Tibial artery (tissue), 4 donors: ENCODE measurements at regions of chr7 and their contacts with region 1.

Region 1: DNA sequence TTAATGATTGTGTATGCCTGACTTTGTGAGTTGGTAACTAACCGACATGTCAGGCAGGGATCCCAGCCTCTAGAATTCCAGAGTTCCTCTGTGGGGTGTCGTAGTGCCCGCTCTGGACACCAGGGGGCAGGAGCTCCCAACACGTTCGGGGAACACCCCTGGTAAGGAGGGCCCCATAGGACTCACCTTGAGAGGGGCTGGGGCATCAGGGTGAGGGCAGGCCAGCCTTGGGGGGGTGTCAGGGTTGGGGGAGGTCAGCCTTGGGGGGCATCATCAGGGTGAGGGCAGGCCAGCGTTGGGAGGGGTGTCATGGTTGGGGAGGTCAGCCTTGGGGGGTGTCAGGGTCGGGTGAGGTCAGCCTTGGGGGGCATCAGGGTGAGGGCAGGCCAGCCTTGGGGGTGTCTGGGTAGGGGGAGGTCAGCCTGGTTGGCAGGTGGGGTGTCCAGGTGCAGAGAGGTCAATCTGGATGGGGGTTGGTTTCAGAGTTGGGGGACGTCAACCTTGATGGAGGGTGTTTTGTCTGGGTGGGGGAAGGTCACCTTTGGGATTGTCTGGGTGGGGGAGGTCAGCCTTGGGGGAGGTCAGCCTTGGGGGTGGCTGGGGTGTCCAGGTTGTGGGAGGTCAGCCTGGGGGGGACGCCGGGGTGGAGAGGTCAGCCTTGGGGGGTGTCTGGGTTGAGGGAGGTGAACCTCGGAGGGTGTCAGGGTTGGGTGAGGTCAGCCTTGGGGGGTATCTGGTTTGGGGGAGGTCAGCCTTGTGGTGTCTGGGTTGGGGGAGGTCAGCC is 45.6 kb upstream of the SUN1 start:
- DNase-seq: peak; percentile 64 to 86
- H3K4me3 ChIP-seq: no peak overlapping the region
- H3K27ac ChIP-seq: peak overlapping the region; percentile 8 to 48
- H3K4me1 ChIP-seq: peaks cover 0 to 13% (median 5%) of the 10 kb centered on the region in 4 donors
- H3K27me3 ChIP-seq: no peaks in the 10 kb centered on the region
- CTCF ChIP-seq: peak; percentile 86 to 90

Region 2: GRCh38 chr7:831596-832166 is 45.0 kb after region 1 on chr7:
- intact Hi-C with region 1: loop called (anchors 10 kb)
- DNase-seq: no peak
- H3K4me3 ChIP-seq: peak overlapping the region; percentile 23 to 34
- H3K27ac ChIP-seq: peak overlapping the region; percentile 87 to 91
- H3K4me1 ChIP-seq: peaks cover 19 to 95% (median 63%) of the 10 kb centered on the region in 4 donors
- H3K27me3 ChIP-seq: no peaks in the 10 kb centered on the region
- CTCF ChIP-seq: no peak